ENCODE measurements at regions of chr1 and their contacts with region 1.

Region 1: GRCh38 chr1:168065506-168065905 is 71.2 kb downstream of the GPR161 start:
- DNase-seq: no peak
- H3K4me3 ChIP-seq: no peak overlapping the region
- H3K27ac ChIP-seq: no peak overlapping the region
- H3K4me1 ChIP-seq: no peaks in the 10 kb centered on the region
- H3K27me3 ChIP-seq: no peaks in the 10 kb centered on the region
- CTCF ChIP-seq: no peak

Region 2: DNA sequence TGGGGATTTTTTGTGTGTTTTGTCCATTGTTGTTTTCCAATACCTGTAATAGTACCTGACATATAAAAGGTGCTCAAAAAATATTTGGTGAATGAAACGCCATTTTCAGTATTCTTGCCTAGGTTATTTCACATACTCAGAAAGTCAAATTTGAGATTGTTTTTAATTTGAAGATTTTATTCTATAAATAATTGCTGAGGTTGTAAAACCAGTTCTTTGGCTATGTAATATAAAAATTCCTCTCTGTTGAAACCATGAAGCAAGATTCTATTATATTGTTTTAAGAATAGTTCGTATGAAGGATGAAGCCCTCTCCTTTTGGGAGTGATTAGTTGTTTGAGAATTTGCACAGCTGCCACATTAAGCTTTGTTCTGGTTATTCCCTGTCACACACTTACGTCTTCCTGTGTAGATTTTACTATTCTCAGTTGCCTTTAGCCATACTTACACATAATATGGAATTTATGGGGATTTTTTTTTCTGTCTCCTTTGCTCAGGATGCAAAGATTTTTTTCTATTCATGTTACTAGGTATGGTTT is 68.4 kb before region 1 on chr1:
- CTCF ChIA-PET with region 1: no interaction called
- POLR2A ChIA-PET with region 1: no interaction called
- intact Hi-C with region 1: no loop called
- DNase-seq: no peak
- H3K4me3 ChIP-seq: no peak overlapping the region
- H3K27ac ChIP-seq: no peak overlapping the region
- H3K4me1 ChIP-seq: no peaks in the 10 kb centered on the region
- H3K27me3 ChIP-seq: no peaks in the 10 kb centered on the region
- CTCF ChIP-seq: no peak

Region 3: GRCh38 chr1:168032029-168032428 is 33.5 kb before region 1 on chr1:
- CTCF ChIA-PET with region 1: no interaction called
- POLR2A ChIA-PET with region 1: no interaction called
- intact Hi-C with region 1: loop called (anchors 5 kb)
- DNase-seq: no peak
- H3K4me3 ChIP-seq: no peak overlapping the region
- H3K27ac ChIP-seq: no peak overlapping the region
- H3K4me1 ChIP-seq: no peaks in the 10 kb centered on the region
- H3K27me3 ChIP-seq: no peaks in the 10 kb centered on the region
- CTCF ChIP-seq: no peak

Measured in PC-9 (cell line).